ENCODE measurements at regions of chr2 and their contacts with region 1.

Region 1: GRCh38 chr2:161308178-161308955 is at the start of gene PSMD14:
- DNase-seq: peak; percentile 96
- H3K4me3 Mint-ChIP-seq: peak within 1 kb of the TSS; percentile 86
- H3K27ac Mint-ChIP-seq: peak within 1 kb of the TSS; percentile 91
- H3K4me1 Mint-ChIP-seq: peaks cover 35% of the 10 kb centered on the region
- H3K27me3 Mint-ChIP-seq: no peaks in the 10 kb centered on the region
- total RNA-seq, gene PSMD14: 76.2 to 79.4 TPM

Region 2: GRCh38 chr2:161243905-161244304 is 64.5 kb before region 1 on chr2:
- CTCF ChIA-PET with region 1: no interaction called
- intact Hi-C with region 1: loop called (anchors 1 kb)
- DNase-seq: peak; percentile 37
- H3K4me3 Mint-ChIP-seq: peak overlapping the region; percentile 87
- H3K27ac Mint-ChIP-seq: peak overlapping the region; percentile 95
- H3K4me1 Mint-ChIP-seq: peaks cover 50% of the 10 kb centered on the region
- H3K27me3 Mint-ChIP-seq: no peaks in the 10 kb centered on the region

Region 3: GRCh38 chr2:161382747-161383146 is 74.4 kb after region 1 on chr2:
- CTCF ChIA-PET with region 1: no interaction called
- intact Hi-C with region 1: loop called (anchors 2 kb)
- DNase-seq: no peak
- H3K4me3 Mint-ChIP-seq: no peak overlapping the region
- H3K27ac Mint-ChIP-seq: no peak overlapping the region
- H3K4me1 Mint-ChIP-seq: peaks cover 11% of the 10 kb centered on the region
- H3K27me3 Mint-ChIP-seq: no peaks in the 10 kb centered on the region

Region 4: GRCh38 chr2:161775971-161776370 is 467.6 kb after region 1 on chr2:
- CTCF ChIA-PET with region 1: no interaction called
- intact Hi-C with region 1: no loop called
- DNase-seq: no peak
- H3K4me3 Mint-ChIP-seq: no peak overlapping the region
- H3K27ac Mint-ChIP-seq: no peak overlapping the region
- H3K4me1 Mint-ChIP-seq: no peaks in the 10 kb centered on the region
- H3K27me3 Mint-ChIP-seq: no peaks in the 10 kb centered on the region

Region 5: GRCh38 chr2:162343824-162344616 is 1035.7 kb after region 1 on chr2 and contains the start of gene GCA:
- CTCF ChIA-PET with region 1: no interaction called
- intact Hi-C with region 1: loop called (anchors 5 kb)
- DNase-seq: peak; percentile 99
- H3K4me3 Mint-ChIP-seq: peak within 1 kb of the TSS; percentile 87
- H3K27ac Mint-ChIP-seq: peak within 1 kb of the TSS; percentile 72
- H3K4me1 Mint-ChIP-seq: peaks cover 12% of the 10 kb centered on the region
- H3K27me3 Mint-ChIP-seq: no peaks in the 10 kb centered on the region
- total RNA-seq, gene GCA: 36.7 to 40.2 TPM

Measured in activated naive CD4-positive, alpha-beta T cell treated with anti-CD3 and anti-CD28 coated beads for 36 hours (primary cell).